GM23248 (cell line): ENCODE measurements at regions of chr4 and their contacts with region 1.

Region 1: GRCh38 chr4:109406338-109406931 is 27.2 kb upstream of the SEC24B start:
- DNase-seq: peak; percentile 66
- H3K4me3 ChIP-seq: no peak overlapping the region
- H3K27ac ChIP-seq: no peak overlapping the region
- H3K4me1 ChIP-seq: peaks cover 10% of the 10 kb centered on the region; the same call in 1 of the 2 replicates
- H3K27me3 ChIP-seq: no peaks in the 10 kb centered on the region

Region 2: GRCh38 chr4:108834835-108835384 is 571.5 kb before region 1 on chr4:
- in situ Hi-C with region 1: loop called (anchors 10 kb)
- DNase-seq: peak; percentile 85
- H3K4me3 ChIP-seq: 0 out of 2 replicates have a peak overlapping the region, but pooled peaks have one; percentile 6
- H3K27ac ChIP-seq: peak overlapping the region; percentile 36
- H3K4me1 ChIP-seq: peaks cover 29% of the 10 kb centered on the region
- H3K27me3 ChIP-seq: no peaks in the 10 kb centered on the region

Region 3: GRCh38 chr4:109091727-109092409 is 314.6 kb before region 1 on chr4:
- in situ Hi-C with region 1: no loop called
- DNase-seq: no peak
- H3K4me3 ChIP-seq: no peak overlapping the region
- H3K27ac ChIP-seq: no peak overlapping the region
- H3K4me1 ChIP-seq: no peaks in the 10 kb centered on the region
- H3K27me3 ChIP-seq: no peaks in the 10 kb centered on the region